Transverse colon (tissue), 4 donors: ENCODE measurements at regions of chr7 and their contacts with region 1.

Region 1: GRCh38 chr7:148714498-148714897 is 15.8 kb downstream of the CUL1 start:
- DNase-seq: no peak
- H3K4me3 ChIP-seq: no peak overlapping the region
- H3K27ac ChIP-seq: no peak overlapping the region
- H3K4me1 ChIP-seq: peaks cover 3 to 45% (median 10%) of the 10 kb centered on the region in 4 donors
- H3K27me3 ChIP-seq: no peaks in the 10 kb centered on the region
- CTCF ChIP-seq: no peak
- EP300 ChIP-seq: no peak
- POLR2A ChIP-seq: no peak

Region 2: DNA sequence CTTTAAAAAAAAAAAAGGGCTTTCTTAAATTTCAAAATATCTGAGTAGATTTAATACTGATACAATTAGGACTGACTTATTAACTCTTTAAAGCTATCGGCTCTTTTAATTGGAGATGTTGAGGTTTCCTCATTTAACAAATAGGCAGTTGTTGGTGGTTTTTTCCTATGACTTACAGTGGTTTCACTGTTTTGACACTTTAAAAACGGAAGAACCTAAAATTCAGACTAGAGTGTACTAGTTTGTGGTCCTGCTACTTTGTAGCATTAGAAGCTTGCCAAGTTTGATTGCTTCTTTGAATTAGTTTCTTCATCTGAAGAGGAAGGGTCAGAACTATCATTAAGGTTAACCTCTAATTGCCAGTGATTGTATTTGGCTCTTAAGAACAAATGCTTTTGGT is 11.9 kb after region 1 on chr7:
- in situ Hi-C with region 1: no loop called
- intact Hi-C with region 1: loop called (anchors 1 kb)
- DNase-seq: no peak
- H3K4me3 ChIP-seq: no peak overlapping the region
- H3K27ac ChIP-seq: no peak overlapping the region
- H3K4me1 ChIP-seq: peaks cover 8 to 35% (median 22%) of the 10 kb centered on the region in 4 donors
- H3K27me3 ChIP-seq: no peaks in the 10 kb centered on the region
- CTCF ChIP-seq: no peak
- EP300 ChIP-seq: no peak
- POLR2A ChIP-seq: no peak